ENCODE measurements at regions of chr6 and their contacts with region 1.

Region 1: GRCh38 chr6:16332175-16332542 is 93.8 kb downstream of the GMPR start:
- DNase-seq: peak; percentile 61 to 90 (median 81)
- ATAC-seq: peak; percentile 97
- H3K4me3 ChIP-seq: peak overlapping the region in 1 of 2 experiments; percentile 27
- H3K4me3 Mint-ChIP-seq: no peak overlapping the region
- H3K27ac ChIP-seq: no peak overlapping the region
- H3K27ac Mint-ChIP-seq: no peak overlapping the region
- H3K4me1 ChIP-seq: peaks cover 10% of the 10 kb centered on the region
- H3K4me1 Mint-ChIP-seq: no peaks in the 10 kb centered on the region
- H3K27me3 ChIP-seq: no peaks in the 10 kb centered on the region
- H3K27me3 Mint-ChIP-seq: no peaks in the 10 kb centered on the region
- CTCF ChIP-seq: peak; percentile 67

Region 2: GRCh38 chr6:15213838-15214400 is 1118.2 kb before region 1 on chr6:
- CTCF ChIA-PET with region 1: no interaction called
- POLR2A ChIA-PET with region 1: no interaction called
- intact Hi-C with region 1: no loop called
- DNase-seq: no peak
- ATAC-seq: no peak
- H3K4me3 ChIP-seq: no peak overlapping the region
- H3K4me3 Mint-ChIP-seq: no peak overlapping the region
- H3K27ac ChIP-seq: no peak overlapping the region
- H3K27ac Mint-ChIP-seq: no peak overlapping the region
- H3K4me1 ChIP-seq: no peaks in the 10 kb centered on the region
- H3K4me1 Mint-ChIP-seq: no peaks in the 10 kb centered on the region
- H3K27me3 ChIP-seq: no peaks in the 10 kb centered on the region
- H3K27me3 Mint-ChIP-seq: no peaks in the 10 kb centered on the region
- CTCF ChIP-seq: no peak

Region 3: DNA sequence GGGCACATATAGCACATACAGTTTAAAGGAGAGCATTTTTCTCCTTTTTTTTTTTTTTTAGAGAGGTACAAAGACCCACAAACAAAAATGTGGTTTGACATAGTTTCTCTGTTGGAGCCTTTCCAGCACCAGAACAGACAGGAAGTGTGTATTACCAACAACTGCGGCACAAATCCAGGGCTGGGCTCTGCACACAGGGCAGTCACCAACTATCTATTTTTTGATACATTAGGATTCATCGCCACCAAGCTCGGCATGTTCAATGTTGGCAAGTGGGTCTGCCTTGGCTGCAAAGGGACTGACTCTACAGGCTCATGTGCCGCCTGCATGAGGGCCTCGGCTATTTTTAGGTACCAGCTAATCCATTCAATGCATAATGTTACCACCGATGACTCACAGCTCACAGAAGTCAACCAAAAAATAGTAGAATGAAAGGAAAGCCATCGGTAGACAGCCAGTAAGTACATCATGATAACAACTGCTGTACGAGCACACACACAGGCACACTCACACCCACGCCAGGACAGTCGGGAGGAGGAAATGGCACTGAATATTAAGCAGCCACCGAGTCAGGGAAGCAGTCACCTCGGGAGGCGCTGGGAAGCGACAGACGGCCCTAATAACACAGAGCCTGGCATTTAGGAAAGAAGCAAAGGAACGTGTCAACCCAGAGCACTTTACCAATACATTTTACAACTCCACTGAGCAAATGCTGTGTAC is 12.2 kb before region 1 on chr6:
- CTCF ChIA-PET with region 1: interaction called, 168 read pairs
- POLR2A ChIA-PET with region 1: interaction called, 8 read pairs
- intact Hi-C with region 1: loop called (anchors 1 kb)
- DNase-seq: peak; percentile 27 to 90 (median 68)
- ATAC-seq: peak; percentile 58
- H3K4me3 ChIP-seq: peak overlapping the region; percentile 17 to 33
- H3K4me3 Mint-ChIP-seq: peak overlapping the region; percentile 67
- H3K27ac ChIP-seq: peak overlapping the region; percentile 69 to 85
- H3K27ac Mint-ChIP-seq: peak overlapping the region; percentile 94
- H3K4me1 ChIP-seq: peaks cover 73% of the 10 kb centered on the region
- H3K4me1 Mint-ChIP-seq: peaks cover 75% of the 10 kb centered on the region
- H3K27me3 ChIP-seq: no peaks in the 10 kb centered on the region
- H3K27me3 Mint-ChIP-seq: no peaks in the 10 kb centered on the region
- CTCF ChIP-seq: no peak

Region 4: GRCh38 chr6:16409531-16410441 is 77.6 kb after region 1 on chr6:
- CTCF ChIA-PET with region 1: interaction called, 6 read pairs
- POLR2A ChIA-PET with region 1: no interaction called
- intact Hi-C with region 1: loop called (anchors 1 to 2 kb)
- DNase-seq: peak; percentile 8 to 76 (median 60)
- ATAC-seq: peak; percentile 67
- H3K4me3 ChIP-seq: no peak overlapping the region
- H3K4me3 Mint-ChIP-seq: no peak overlapping the region
- H3K27ac ChIP-seq: no peak overlapping the region
- H3K27ac Mint-ChIP-seq: peak overlapping the region; percentile 7
- H3K4me1 ChIP-seq: no peaks in the 10 kb centered on the region
- H3K4me1 Mint-ChIP-seq: peaks cover 26% of the 10 kb centered on the region
- H3K27me3 ChIP-seq: no peaks in the 10 kb centered on the region
- H3K27me3 Mint-ChIP-seq: no peaks in the 10 kb centered on the region
- CTCF ChIP-seq: peak; percentile 66

Region 5: DNA sequence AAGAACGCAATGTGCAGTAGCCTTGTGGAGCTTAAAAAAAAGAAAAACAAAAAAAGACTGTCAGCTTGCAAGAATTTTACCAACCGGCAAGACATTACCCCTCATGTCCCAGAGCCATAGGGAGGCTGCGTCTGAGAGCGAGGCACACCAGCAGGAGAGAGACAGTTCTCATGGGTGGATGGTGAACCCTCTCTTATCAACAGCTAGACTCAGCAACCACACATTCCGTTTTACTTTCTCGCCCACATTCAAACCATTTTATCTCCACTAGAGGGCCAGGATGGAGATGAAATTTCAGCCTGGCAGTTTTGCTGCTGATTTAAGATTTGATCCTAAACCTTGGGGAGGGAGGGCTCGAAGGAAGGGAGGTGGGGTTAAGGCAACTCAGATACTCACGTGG is 182.1 kb after region 1 on chr6:
- CTCF ChIA-PET with region 1: interaction called, 8 read pairs
- POLR2A ChIA-PET with region 1: no interaction called
- intact Hi-C with region 1: loop called (anchors 5 kb)
- DNase-seq: peak in 5 of 9 experiments; percentile 19 to 68 (median 26)
- ATAC-seq: peak; percentile 37
- H3K4me3 ChIP-seq: no peak overlapping the region
- H3K4me3 Mint-ChIP-seq: no peak overlapping the region
- H3K27ac ChIP-seq: no peak overlapping the region
- H3K27ac Mint-ChIP-seq: peak overlapping the region; percentile 73
- H3K4me1 ChIP-seq: peaks cover 43% of the 10 kb centered on the region
- H3K4me1 Mint-ChIP-seq: peaks cover 64% of the 10 kb centered on the region
- H3K27me3 ChIP-seq: no peaks in the 10 kb centered on the region
- H3K27me3 Mint-ChIP-seq: no peaks in the 10 kb centered on the region
- CTCF ChIP-seq: no peak

Region 6: GRCh38 chr6:16819752-16820151 is 487.6 kb after region 1 on chr6:
- CTCF ChIA-PET with region 1: interaction called, 3 read pairs
- POLR2A ChIA-PET with region 1: no interaction called
- intact Hi-C with region 1: loop called in 1 of 2 experiments (anchors 2 kb)
- DNase-seq: peak in 2 of 9 experiments; percentile 16 to 35
- ATAC-seq: no peak
- H3K4me3 ChIP-seq: no peak overlapping the region
- H3K4me3 Mint-ChIP-seq: no peak overlapping the region
- H3K27ac ChIP-seq: no peak overlapping the region
- H3K27ac Mint-ChIP-seq: no peak overlapping the region
- H3K4me1 ChIP-seq: no peaks in the 10 kb centered on the region
- H3K4me1 Mint-ChIP-seq: no peaks in the 10 kb centered on the region
- H3K27me3 ChIP-seq: no peaks in the 10 kb centered on the region
- H3K27me3 Mint-ChIP-seq: peaks cover 13% of the 10 kb centered on the region
- CTCF ChIP-seq: no peak

Region 7: GRCh38 chr6:17015144-17015543 is 683.0 kb after region 1 on chr6:
- CTCF ChIA-PET with region 1: no interaction called
- POLR2A ChIA-PET with region 1: no interaction called
- intact Hi-C with region 1: no loop called
- DNase-seq: peak in 3 of 9 experiments; percentile 17 to 45 (median 25)
- ATAC-seq: peak; percentile 19
- H3K4me3 ChIP-seq: no peak overlapping the region
- H3K4me3 Mint-ChIP-seq: peak overlapping the region; percentile 80
- H3K27ac ChIP-seq: no peak overlapping the region
- H3K27ac Mint-ChIP-seq: no peak overlapping the region
- H3K4me1 ChIP-seq: peaks cover 10% of the 10 kb centered on the region
- H3K4me1 Mint-ChIP-seq: peaks cover 15% of the 10 kb centered on the region
- H3K27me3 ChIP-seq: no peaks in the 10 kb centered on the region
- H3K27me3 Mint-ChIP-seq: peaks cover 18% of the 10 kb centered on the region
- CTCF ChIP-seq: no peak

Region 8: DNA sequence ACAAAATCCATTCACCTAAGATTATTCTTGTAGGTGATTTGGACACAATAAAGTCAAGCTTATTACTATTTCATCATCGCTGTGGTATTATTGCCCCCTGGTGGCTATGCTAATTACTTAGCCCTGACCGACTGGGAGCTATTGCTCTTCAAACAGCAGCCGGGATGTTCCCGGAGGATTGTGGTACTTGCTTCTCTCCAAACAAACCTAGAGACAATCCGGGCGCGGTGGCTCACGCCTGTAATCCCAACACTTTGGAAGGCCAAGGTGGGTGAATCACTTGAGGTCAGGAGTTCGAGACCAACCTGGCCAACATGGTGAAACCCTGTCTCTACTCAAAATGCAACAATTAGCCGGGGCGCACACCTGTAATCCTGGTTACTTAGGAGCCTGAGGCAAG is 754.3 kb after region 1 on chr6:
- CTCF ChIA-PET with region 1: interaction called, 3 read pairs
- POLR2A ChIA-PET with region 1: no interaction called
- intact Hi-C with region 1: loop called in 1 of 2 experiments (anchors 5 kb)
- DNase-seq: peak in 4 of 9 experiments; percentile 14 to 35 (median 23)
- ATAC-seq: no peak
- H3K4me3 ChIP-seq: no peak overlapping the region
- H3K4me3 Mint-ChIP-seq: no peak overlapping the region
- H3K27ac ChIP-seq: no peak overlapping the region
- H3K27ac Mint-ChIP-seq: no peak overlapping the region
- H3K4me1 ChIP-seq: no peaks in the 10 kb centered on the region
- H3K4me1 Mint-ChIP-seq: no peaks in the 10 kb centered on the region
- H3K27me3 ChIP-seq: peaks cover 0 to 5% of the 10 kb centered on the region in 2 experiments
- H3K27me3 Mint-ChIP-seq: peaks cover 16% of the 10 kb centered on the region
- CTCF ChIP-seq: no peak

Measured in CD8-positive, alpha-beta T cell (primary cell).